ENCODE measurements at regions of chr6 and their contacts with region 1.

Region 1: DNA sequence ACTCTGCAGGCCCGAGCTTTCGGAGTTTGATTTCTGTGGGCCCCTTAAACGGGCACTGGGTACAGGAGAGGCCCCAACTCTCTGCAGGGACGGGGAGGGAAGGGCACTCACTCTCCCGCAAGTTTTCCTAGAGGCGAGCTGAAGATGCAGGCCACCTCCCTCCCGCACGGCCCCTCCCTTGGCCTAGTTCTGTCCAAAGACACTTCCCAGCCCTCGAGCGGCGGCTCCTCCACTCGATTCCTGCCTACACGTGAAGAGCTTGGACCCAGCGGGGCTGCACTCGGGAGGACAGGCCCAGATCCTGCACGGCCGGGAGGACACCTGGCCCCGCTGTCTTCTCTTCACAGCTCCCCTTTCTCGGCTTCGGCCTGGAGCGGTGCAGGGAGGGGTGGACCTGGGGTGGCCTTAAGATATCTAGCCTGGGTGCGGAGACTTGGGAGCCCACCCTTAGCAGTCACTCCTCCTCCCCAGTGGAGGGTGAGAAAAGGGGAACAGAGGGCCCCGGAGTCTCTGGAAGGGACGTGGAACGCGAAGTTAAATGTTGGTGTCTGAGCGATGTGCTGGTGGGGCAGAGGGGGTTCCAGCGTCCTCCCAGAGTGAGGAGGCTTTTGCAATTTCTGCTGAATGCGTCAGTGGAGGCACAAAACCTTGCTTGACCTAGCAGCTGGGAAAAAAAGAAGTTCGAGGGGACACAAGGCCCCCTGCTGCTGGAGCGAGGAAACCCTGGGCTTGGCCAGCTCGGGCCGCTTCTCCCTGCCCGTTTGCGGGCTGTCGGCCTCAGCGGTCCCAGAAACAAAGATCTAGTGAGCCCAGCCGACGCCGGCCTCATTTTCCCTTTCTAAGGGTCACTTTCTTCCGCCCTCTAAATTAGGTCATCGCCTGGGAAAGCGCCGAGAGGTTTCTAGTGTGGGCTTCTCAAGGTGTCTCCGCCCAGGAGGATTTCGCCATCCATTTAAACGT is 4.9 kb downstream of the OLIG3 start:
- DNase-seq: no peak
- ATAC-seq: peak; percentile 10
- H3K4me3 Mint-ChIP-seq: peak overlapping the region; percentile 33
- H3K27ac Mint-ChIP-seq: no peak overlapping the region
- H3K4me1 Mint-ChIP-seq: peaks cover 47% of the 10 kb centered on the region
- H3K27me3 Mint-ChIP-seq: peaks cover 78% of the 10 kb centered on the region
- CTCF ChIP-seq: no peak

Region 2: DNA sequence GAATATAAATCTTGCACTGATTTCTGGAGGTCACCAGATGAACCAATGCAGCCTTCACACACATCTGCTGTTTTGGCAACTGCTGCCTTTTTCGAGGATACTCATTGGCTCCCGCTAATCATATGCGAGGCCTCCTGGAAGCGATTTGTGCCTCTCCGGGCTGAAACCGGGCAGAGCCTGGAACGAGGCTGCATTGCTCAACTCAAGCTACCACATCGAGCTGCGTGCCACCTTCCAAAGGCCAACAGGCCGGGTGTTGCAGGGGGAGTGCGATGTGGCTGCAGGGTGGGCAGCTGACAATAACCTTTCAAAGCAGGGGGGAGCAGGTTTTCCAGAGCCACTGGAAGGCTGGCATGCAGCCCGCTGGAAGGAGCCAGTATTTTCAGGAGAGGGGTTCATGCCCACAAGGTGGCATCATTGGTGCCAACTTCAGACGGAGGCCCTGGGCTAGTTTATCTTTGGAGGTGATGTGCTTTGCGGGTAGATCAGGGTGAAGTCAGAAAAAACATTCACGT is 147.6 kb before region 1 on chr6:
- CTCF ChIA-PET with region 1: no interaction called
- POLR2A ChIA-PET with region 1: no interaction called
- intact Hi-C with region 1: loop called (anchors 2 kb)
- DNase-seq: no peak
- ATAC-seq: no peak
- H3K4me3 Mint-ChIP-seq: no peak overlapping the region
- H3K27ac Mint-ChIP-seq: no peak overlapping the region
- H3K4me1 Mint-ChIP-seq: peaks cover 11% of the 10 kb centered on the region
- H3K27me3 Mint-ChIP-seq: peaks cover 5% of the 10 kb centered on the region
- CTCF ChIP-seq: no peak

Region 3: DNA sequence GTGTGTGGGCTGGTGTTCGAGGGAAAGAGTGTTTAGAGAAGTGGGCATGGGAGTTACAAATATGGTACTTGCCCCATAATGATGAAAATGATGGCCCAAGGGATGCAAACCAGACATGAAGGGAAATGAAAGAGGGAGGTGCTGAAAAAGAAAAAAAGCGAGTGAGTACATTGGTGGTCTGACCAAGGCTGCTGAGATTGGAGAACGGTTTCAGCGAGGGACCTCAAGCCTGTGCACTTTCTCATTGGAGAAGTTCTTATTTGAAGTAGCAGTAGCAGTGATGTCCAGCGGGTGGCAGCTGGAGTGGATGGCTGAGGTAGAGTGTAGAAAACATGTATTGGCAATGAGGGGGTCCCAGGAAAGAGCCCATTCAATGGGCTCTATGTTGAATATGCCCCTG is 432.5 kb after region 1 on chr6:
- CTCF ChIA-PET with region 1: no interaction called
- POLR2A ChIA-PET with region 1: no interaction called
- intact Hi-C with region 1: no loop called
- DNase-seq: no peak
- ATAC-seq: peak; percentile 31
- H3K4me3 Mint-ChIP-seq: no peak overlapping the region
- H3K27ac Mint-ChIP-seq: no peak overlapping the region
- H3K4me1 Mint-ChIP-seq: peaks cover 50% of the 10 kb centered on the region
- H3K27me3 Mint-ChIP-seq: no peaks in the 10 kb centered on the region
- CTCF ChIP-seq: no peak